ENCODE measurements at regions of chr20 and their contacts with region 1.

Region 1: DNA sequence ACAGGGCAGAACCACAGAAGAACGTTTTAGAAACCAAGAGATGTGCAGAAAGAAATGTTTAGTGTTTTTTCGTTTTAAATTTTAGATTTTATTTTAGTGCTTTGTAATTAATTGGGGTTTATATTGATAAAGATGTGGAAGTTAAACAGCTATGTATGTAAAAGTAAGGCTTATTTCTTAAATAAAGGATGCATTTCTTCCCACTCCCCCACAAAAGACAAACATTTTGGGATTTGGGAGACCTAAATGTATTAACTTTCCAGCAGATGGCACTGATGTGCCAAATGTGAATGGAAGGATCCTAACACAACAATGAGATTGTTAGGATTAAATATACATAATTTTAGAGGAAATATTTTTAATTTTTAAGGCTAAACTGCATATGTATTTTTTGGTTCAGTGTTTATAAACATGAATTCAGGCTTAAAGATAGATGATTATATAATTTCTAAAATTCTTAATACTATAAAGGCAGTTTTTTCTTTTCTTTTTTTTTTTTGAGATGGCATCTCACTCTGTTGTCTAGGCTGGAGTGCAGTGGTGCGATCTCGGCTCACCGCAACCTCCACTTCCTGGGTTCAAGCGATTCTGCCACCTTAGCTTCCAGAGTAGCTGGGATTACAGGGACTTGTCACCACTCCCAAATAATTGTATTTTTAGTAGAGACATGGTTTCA is 12.0 kb downstream of the PFDN4 start:
- DNase-seq: no peak
- H3K4me3 ChIP-seq: no peak overlapping the region
- CTCF ChIP-seq: peak; percentile 42

Region 2: DNA sequence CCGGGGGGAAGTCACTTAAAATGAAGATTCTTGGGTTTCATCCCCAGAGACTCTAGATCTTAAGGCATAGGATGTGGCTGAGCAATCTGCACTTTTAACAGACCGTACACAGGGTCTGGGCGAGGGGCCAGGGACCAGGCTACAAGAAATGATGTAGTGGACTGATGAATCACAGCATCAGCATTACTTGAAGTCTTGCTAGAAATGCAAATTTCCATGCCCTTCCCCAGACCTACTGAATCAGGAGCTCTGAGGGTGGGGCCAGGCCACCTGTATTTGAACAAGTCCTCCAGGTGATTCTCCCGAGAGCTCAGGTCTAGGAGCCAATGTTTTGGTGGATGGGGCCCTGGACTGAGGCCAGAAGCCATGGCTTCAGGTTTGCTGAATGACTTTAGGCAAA is 423.9 kb after region 1 on chr20:
- CTCF ChIA-PET with region 1: interaction called, 189 read pairs
- POLR2A ChIA-PET with region 1: no interaction called
- DNase-seq: peak; percentile 62
- H3K4me3 ChIP-seq: no peak overlapping the region
- CTCF ChIP-seq: no peak

Region 3: GRCh38 chr20:54649511-54649962 is 429.6 kb after region 1 on chr20:
- CTCF ChIA-PET with region 1: interaction called, 189 read pairs
- POLR2A ChIA-PET with region 1: no interaction called
- DNase-seq: no peak
- H3K4me3 ChIP-seq: no peak overlapping the region
- CTCF ChIP-seq: peak; percentile 79